ENCODE measurements at regions of chr3 and their contacts with region 1.

Region 1: DNA sequence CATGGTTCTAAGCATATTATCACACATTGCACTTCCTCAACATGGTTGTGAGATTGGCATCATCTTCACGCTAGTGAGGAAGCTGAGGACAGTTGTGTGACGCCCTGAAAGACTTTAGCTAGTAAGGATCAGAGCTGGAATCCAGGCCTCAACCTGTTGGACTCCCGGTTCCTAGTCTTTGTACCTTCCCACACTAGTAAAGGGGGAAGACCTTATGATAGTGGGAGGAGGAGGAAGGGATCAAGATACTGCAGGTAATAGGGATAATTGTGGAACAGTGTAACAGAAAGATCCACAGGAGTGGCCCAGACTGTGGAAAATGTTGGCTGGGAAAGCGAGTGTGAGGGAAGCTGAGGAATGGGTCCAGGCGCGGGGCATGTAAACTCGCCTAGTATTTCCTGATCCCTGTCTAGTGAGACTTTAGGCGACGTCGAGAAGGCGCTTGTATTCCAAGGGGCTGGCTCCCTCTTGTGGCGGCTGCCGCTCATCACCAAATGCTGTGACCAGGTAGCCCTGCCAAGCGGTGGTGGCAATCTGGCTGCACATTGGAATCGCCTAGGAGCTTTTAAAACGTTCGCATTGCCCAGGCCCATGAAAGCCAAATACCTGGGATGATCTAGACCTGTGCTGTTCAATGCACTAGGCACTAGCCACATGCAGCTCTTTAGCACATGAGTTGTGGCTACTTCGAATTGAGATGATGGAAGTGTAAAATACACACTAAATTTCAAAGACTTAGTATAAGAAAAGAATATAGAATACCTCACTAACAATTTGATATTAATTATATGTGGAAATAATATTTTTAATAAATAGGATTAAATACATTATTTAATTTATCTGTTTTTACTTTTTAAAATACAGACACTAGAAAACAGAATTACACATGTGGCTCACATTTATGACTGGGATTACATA is 38.8 kb upstream of the CLDN18 start:
- DNase-seq: peak; percentile 86
- ATAC-seq: peak; percentile 94 to 99
- H3K4me3 ChIP-seq: no peak overlapping the region
- H3K27ac ChIP-seq: no peak overlapping the region
- H3K4me1 ChIP-seq: peaks cover 4% of the 10 kb centered on the region
- H3K27me3 ChIP-seq: no peaks in the 10 kb centered on the region
- CTCF ChIP-seq: peak; percentile 82

Region 2: GRCh38 chr3:137105277-137105977 is 865.7 kb before region 1 on chr3:
- intact Hi-C with region 1: loop called (anchors 5 kb)
- DNase-seq: no peak
- ATAC-seq: peak; percentile 62 to 64
- H3K4me3 ChIP-seq: no peak overlapping the region
- H3K27ac ChIP-seq: no peak overlapping the region
- H3K4me1 ChIP-seq: peaks cover 6% of the 10 kb centered on the region
- H3K27me3 ChIP-seq: peaks cover 7% of the 10 kb centered on the region
- CTCF ChIP-seq: peak; percentile 63

Measured in lower lobe of right lung (tissue), 2 donors.